HCT116 (cell line): ENCODE measurements at regions of chr20 and their contacts with region 1.

Region 1: GRCh38 chr20:5557123-5557522 is 193.1 kb upstream of the SHLD1 start:
- DNase-seq: peak; percentile 13
- ATAC-seq: peak; percentile 86
- H3K4me3 ChIP-seq: no peak overlapping the region
- H3K27ac ChIP-seq: no peak overlapping the region
- H3K4me1 ChIP-seq: no peaks in the 10 kb centered on the region
- H3K27me3 ChIP-seq: no peaks in the 10 kb centered on the region
- CTCF ChIP-seq: peak; percentile 43 to 81 (median 71); a peak in 5 of 6 replicates
- POLR2A ChIP-seq: no peak
- RAD21 ChIP-seq: peak; percentile 65

Region 2: GRCh38 chr20:5569021-5569420 is 11.9 kb after region 1 on chr20:
- CTCF ChIA-PET with region 1: interaction called, 18 read pairs
- POLR2A ChIA-PET with region 1: no interaction called
- RAD21 ChIA-PET with region 1: interaction called in 1 of 2 experiments, 3 read pairs
- intact Hi-C with region 1: no loop called
- DNase-seq: peak; percentile 28
- ATAC-seq: peak; percentile 84
- H3K4me3 ChIP-seq: no peak overlapping the region
- H3K27ac ChIP-seq: no peak overlapping the region
- H3K4me1 ChIP-seq: no peaks in the 10 kb centered on the region
- H3K27me3 ChIP-seq: no peaks in the 10 kb centered on the region
- CTCF ChIP-seq: peak; percentile 31 to 52 (median 40); a peak in 4 of 6 replicates
- POLR2A ChIP-seq: no peak
- RAD21 ChIP-seq: peak; percentile 62

Region 3: DNA sequence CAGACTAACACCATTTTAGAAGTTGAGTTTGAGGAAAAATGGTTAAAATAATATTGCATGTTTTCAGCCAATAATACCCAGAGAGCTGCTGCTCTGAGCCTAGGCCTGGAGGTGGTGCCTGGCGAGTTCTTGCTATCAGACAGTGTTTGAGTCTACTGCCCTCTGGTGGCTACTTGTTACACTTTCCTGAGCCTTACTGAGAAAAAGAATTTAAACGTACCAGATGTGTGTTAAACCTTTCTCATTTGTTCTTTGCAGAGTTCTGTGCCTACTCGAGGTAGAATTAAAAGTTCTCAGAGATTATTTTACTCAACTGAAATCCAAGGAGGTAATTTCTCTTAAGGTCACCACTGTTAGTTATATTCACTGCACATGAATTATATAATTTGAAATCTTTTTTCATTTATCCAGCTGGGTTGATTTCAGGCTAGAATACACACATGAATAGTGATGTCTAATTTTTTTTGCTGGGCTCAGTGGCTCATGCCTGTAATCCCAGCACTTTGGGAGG is 231.3 kb after region 1 on chr20:
- CTCF ChIA-PET with region 1: interaction called, 80 read pairs
- POLR2A ChIA-PET with region 1: no interaction called
- RAD21 ChIA-PET with region 1: interaction called, 10 read pairs
- intact Hi-C with region 1: loop called (anchors 1 kb)
- DNase-seq: peak; percentile 88
- ATAC-seq: peak; percentile 99
- H3K4me3 ChIP-seq: no peak overlapping the region
- H3K27ac ChIP-seq: no peak overlapping the region
- H3K4me1 ChIP-seq: peaks cover 15 to 23% of the 10 kb centered on the region in 2 experiments
- H3K27me3 ChIP-seq: no peaks in the 10 kb centered on the region
- CTCF ChIP-seq: peak; percentile 80 to 95 (median 90)
- POLR2A ChIP-seq: no peak
- RAD21 ChIP-seq: peak; percentile 96

Region 4: GRCh38 chr20:5933802-5934436 is 376.8 kb after region 1 on chr20:
- CTCF ChIA-PET with region 1: interaction called, 9 read pairs
- POLR2A ChIA-PET with region 1: no interaction called
- RAD21 ChIA-PET with region 1: no interaction called
- intact Hi-C with region 1: loop called (anchors 10 kb)
- DNase-seq: no peak
- ATAC-seq: peak; percentile 81
- H3K4me3 ChIP-seq: no peak overlapping the region
- H3K27ac ChIP-seq: no peak overlapping the region
- H3K4me1 ChIP-seq: no peaks in the 10 kb centered on the region
- H3K27me3 ChIP-seq: peaks cover 11% of the 10 kb centered on the region; the same call in 1 of the 2 replicates
- CTCF ChIP-seq: peak; percentile 17 to 50 (median 47); a peak in 4 of 6 replicates
- POLR2A ChIP-seq: no peak
- RAD21 ChIP-seq: peak; percentile 62

Region 5: DNA sequence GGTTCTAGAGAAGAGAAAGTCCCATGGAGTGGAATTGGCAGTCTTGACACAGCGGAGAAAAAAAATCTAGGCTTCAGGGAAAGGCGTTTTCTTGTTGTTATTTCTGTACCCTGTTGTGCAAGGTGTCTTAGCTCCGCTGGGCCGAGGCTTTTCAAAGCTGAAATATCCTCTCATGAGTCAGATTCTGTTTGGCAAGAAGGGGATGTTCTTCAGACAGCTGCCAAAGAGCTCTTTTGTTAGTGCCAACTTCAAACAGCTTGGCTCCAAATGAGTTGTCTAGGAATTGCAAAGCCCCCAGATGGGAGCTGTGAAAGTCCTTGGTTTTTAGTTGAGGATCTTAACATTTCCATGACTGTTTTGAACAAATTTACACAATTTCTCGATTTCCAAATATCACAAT is 451.1 kb after region 1 on chr20:
- CTCF ChIA-PET with region 1: interaction called, 4 read pairs
- POLR2A ChIA-PET with region 1: no interaction called
- RAD21 ChIA-PET with region 1: no interaction called
- intact Hi-C with region 1: loop called (anchors 1 kb)
- DNase-seq: no peak
- ATAC-seq: no peak
- H3K4me3 ChIP-seq: no peak overlapping the region
- H3K27ac ChIP-seq: no peak overlapping the region
- H3K4me1 ChIP-seq: peaks cover 11 to 18% of the 10 kb centered on the region in 2 experiments
- H3K27me3 ChIP-seq: no peaks in the 10 kb centered on the region
- CTCF ChIP-seq: no peak
- POLR2A ChIP-seq: no peak
- RAD21 ChIP-seq: no peak